GM10248 (cell line): ENCODE measurements at regions of chr2 and their contacts with region 1.

Region 1: GRCh38 chr2:113138428-113139322 is 11.3 kb downstream of the IL1RN start:
- DNase-seq: peak; percentile 74
- CTCF ChIP-seq: peak; percentile 64

Region 2: DNA sequence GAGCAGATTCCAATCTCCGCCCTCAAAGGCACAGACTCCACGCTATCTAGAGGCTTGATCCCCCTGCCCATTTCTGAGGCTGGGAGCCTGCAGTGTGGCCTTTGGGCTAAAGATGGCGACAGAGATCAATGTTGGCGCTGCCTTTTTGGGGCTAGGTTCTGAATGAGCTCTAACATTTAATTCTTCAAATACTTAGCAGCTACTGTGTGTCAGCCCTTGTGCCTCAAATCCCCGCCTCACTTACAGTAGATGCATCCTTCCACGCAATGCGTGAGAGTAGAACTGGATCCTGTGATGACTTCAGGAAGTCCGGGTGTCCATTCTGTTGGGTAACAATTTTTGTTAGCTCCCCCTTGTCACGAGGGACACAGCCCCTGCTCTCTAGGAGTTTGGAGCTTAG is 58.5 kb before region 1 on chr2:
- CTCF ChIA-PET with region 1: interaction called, 48 read pairs
- POLR2A ChIA-PET with region 1: no interaction called
- DNase-seq: peak; percentile 57
- CTCF ChIP-seq: peak; percentile 84

Region 3: GRCh38 chr2:113148606-113149560 is 10.2 kb after region 1 on chr2:
- CTCF ChIA-PET with region 1: interaction called, 58 read pairs
- POLR2A ChIA-PET with region 1: no interaction called
- DNase-seq: no peak
- CTCF ChIP-seq: no peak

Region 4: GRCh38 chr2:113173542-113174395 is 35.1 kb after region 1 on chr2 and contains the start of gene PSD4:
- CTCF ChIA-PET with region 1: interaction called, 133 read pairs
- POLR2A ChIA-PET with region 1: interaction called, 6 read pairs
- DNase-seq: peak; percentile 90
- CTCF ChIP-seq: no peak

Region 5: DNA sequence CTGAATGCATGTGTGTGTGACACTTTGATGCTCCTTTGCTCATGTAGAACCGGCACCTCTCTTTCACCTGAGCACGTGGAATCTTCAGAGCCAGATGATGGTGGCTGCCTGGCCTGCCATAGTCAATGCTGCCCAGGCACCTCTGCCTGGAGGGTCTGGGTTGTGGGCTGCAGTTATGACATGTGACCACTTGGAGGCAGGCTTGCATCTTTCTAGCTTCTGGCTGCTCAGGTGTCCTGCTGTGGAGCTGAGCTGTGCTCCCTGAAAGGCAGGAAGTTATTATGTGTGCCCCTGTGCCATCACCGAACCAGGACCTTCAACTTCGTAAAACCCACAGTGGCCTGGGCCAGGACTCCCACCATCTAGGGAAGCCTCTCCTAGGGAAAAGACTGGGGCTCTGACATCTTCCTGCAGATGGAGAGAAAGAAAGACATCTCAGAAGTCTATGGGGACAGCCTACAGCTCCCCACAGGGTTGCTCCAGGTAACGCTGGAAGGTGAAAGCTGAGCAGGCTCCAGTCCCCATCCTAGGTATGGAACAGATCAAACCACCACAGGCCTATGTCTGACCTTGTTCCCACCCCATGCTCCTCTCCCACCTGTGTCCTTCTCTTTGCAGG is 65.3 kb after region 1 on chr2:
- CTCF ChIA-PET with region 1: interaction called, 162 read pairs
- POLR2A ChIA-PET with region 1: no interaction called
- DNase-seq: peak; percentile 83
- CTCF ChIP-seq: peak; percentile 85

Region 6: DNA sequence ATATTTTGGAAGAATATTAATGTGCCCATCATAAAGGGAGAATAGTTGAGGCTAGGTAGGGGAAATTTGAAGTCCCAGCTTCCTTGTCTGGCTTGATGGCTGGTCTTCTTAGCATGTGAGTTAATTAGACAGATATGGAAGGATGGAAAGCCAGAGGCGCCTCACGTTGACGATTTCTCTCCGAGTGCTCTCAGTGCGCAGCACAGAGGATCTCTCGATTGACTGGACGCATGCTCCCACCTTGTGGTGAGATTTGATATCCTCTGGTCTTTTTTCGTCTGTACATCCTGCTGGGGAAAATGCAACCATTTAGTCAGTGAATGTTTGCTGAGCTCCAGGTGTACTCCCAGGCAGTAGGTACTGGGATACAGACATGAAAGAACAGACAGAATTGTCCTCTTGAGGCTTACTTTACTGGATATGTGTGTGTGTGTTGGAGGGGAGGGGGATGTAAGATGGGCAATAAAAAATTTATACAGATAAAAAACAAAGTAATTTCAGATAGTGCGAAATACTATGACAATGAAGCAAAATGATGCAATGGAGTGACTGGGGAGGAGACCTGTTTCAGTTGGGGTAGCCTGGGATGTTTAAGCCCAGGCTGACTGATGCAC is 231.9 kb after region 1 on chr2:
- CTCF ChIA-PET with region 1: interaction called, 28 read pairs
- POLR2A ChIA-PET with region 1: no interaction called
- DNase-seq: peak; percentile 49
- CTCF ChIP-seq: peak; percentile 53